Esophagus muscularis mucosa (tissue), 4 donors: ENCODE measurements at regions of chr9 and their contacts with region 1.

Region 1: DNA sequence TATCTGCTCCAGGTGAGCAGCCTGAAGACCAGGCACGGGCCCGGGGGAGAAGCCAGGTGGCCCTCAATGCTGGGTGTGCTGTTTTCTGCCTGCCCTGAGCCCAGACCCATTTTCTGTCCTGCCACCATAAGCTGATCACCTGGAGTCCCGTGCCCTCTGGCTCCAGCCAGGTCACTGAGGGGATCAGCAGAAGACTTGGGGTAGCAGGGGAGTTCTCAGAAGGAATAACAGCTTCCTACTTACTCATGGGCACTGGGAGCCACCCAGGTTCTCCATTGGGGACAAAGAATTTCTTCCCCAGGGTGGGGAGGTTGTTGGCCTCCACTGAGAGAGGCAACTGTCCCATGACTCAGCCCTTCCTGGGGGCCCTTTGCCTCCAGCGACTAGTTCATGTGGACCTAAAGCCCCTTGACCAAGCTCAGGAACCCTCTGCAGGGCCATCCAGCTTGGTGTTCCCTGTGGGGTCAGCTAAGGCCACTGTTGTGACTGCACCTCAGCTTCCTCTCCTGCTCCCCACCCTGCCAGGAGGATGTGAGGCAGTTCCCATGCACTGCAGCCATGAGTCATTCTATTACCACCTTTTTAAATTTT is 175.1 kb downstream of the AUH start:
- DNase-seq: peak; percentile 89
- H3K4me3 ChIP-seq: no peak overlapping the region
- H3K27ac ChIP-seq: no peak overlapping the region
- H3K4me1 ChIP-seq: peaks cover 8 to 20% (median 15%) of the 10 kb centered on the region in 4 donors
- H3K27me3 ChIP-seq: no peaks in the 10 kb centered on the region
- CTCF ChIP-seq: no peak
- EP300 ChIP-seq: no peak
- POLR2A ChIP-seq: no peak

Region 2: DNA sequence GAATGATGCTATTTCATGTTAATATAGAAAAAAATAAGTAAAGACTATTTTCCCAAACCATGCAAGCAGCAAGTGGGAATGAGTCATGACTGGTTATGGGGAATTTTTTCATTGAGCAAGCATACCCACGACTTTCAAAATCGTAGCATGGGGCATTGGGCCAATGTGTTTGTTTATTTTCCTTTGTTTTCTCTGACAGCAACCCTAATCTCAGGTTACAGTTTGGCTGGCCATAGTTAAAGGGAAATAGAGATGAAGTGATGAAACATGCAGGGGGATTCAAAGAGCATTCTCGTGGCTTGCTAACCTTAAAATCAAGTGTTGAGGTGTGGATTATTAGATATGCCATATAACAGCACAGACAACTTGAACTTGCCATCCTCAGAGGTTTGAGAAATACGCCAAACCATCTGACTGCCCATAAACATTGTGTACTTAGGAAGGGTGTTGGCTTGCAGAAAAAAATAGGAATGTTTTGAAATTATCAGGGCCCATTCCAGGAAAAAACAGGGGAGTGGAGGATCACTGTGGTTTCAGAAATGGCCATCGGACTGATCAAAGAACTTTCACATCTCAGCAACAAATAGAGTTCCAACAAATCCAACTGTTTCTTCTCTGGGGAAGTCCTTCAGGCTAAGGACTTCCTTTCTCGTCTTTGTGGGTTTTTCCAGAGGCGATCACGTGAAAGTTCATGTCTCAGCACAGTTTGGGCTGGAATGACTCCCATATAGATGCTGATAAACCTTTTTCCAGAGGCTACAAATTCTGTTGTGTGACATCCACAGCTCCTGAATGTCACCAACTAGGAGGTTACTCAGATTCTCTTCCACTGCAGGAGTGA is 125.9 kb before region 1 on chr9:
- intact Hi-C with region 1: no loop called
- DNase-seq: peak; percentile 92
- H3K4me3 ChIP-seq: no peak overlapping the region
- H3K27ac ChIP-seq: peak overlapping the region; percentile 16 to 66 (median 38)
- H3K4me1 ChIP-seq: peaks cover 0 to 21% (median 10%) of the 10 kb centered on the region in 4 donors
- H3K27me3 ChIP-seq: no peaks in the 10 kb centered on the region
- CTCF ChIP-seq: no peak
- EP300 ChIP-seq: no peak
- POLR2A ChIP-seq: no peak

Region 3: DNA sequence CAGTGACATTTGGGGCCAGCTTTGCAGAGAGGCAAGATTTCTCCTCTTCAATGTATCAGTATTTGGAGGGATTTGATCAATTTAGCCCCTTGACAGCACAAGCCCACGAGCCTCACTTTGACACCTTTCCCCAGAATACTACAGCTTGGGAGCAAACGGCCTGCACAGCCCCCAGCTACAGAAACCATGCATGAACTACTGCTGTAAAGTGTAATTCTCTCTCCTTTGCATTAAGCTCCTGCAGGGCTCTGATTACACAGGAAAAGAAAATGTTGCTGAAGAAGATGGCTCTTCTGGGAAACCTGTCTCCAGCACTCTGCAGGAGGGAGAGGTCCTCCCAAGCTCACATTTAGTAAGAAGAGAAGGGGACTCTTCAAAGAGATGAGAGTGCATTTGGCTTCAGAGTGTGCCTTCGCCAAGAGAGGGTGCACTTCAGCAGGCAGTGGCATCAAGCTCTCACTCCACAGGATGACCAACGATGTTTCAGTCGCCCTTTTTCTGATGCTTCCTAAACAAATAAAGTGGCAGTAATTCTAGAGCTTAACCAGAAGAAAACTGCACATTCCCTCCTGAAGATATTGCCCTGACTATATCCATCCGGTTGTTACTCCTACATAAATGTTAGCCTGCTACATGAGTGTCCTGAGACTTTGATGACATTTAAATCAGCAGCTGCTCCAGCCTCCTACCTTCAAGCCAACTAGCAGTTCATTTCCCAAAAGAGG is 97.0 kb before region 1 on chr9:
- intact Hi-C with region 1: loop called (anchors 5 kb)
- DNase-seq: no peak
- H3K4me3 ChIP-seq: no peak overlapping the region
- H3K27ac ChIP-seq: no peak overlapping the region
- H3K4me1 ChIP-seq: peaks cover 0 to 8% (median 3%) of the 10 kb centered on the region in 4 donors
- H3K27me3 ChIP-seq: no peaks in the 10 kb centered on the region
- CTCF ChIP-seq: peak; percentile 54 to 62 (median 59)
- EP300 ChIP-seq: no peak
- POLR2A ChIP-seq: no peak

Region 4: GRCh38 chr9:91111876-91112275 is 74.7 kb before region 1 on chr9:
- intact Hi-C with region 1: loop called (anchors 5 kb)
- DNase-seq: no peak
- H3K4me3 ChIP-seq: no peak overlapping the region
- H3K27ac ChIP-seq: no peak overlapping the region
- H3K4me1 ChIP-seq: peaks cover 0 to 9% (median 4%) of the 10 kb centered on the region in 4 donors
- H3K27me3 ChIP-seq: no peaks in the 10 kb centered on the region
- CTCF ChIP-seq: no peak
- EP300 ChIP-seq: no peak
- POLR2A ChIP-seq: no peak

Region 5: GRCh38 chr9:91131433-91131839 is 55.2 kb before region 1 on chr9:
- intact Hi-C with region 1: no loop called
- DNase-seq: no peak
- H3K4me3 ChIP-seq: no peak overlapping the region
- H3K27ac ChIP-seq: peak overlapping the region in 3 of 4 donors; percentile 30 to 53 (median 42)
- H3K4me1 ChIP-seq: peaks cover 0 to 16% (median 9%) of the 10 kb centered on the region in 4 donors
- H3K27me3 ChIP-seq: no peaks in the 10 kb centered on the region
- CTCF ChIP-seq: no peak
- EP300 ChIP-seq: peak; percentile 66
- POLR2A ChIP-seq: no peak

Region 6: DNA sequence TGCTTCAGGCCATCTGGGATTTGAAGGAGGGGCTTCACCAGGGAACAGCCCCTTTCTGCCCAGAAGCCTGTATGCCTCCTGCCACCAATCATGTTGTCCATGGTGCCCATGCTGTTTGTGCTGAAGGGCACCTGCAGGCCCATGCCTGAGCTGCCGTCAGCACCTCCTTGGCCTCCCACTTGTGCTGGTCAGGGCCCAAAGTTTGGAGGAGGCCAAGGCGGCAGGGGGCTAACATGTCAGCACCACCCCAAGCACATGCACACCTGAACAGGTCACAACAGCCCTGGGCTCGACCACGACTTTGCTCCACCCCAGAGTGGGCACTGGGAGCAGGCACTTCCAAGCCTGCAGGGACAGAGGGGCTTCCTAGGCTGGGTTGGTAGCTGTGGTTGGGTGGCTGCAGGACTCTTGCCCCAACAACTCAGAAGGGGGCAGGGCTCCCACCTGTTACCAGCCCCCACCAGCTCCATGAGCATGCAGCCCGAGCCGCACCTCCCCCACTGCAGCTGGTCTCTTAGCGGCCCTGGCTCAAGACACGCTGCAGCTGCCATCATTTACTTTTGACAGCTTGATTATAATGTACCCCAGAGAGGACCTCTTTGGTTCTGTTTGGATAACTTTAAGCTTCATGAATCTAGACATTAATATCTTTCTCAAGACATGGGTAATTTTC is 256.8 kb after region 1 on chr9:
- intact Hi-C with region 1: no loop called
- DNase-seq: no peak
- H3K4me3 ChIP-seq: no peak overlapping the region
- H3K27ac ChIP-seq: no peak overlapping the region
- H3K4me1 ChIP-seq: no peaks in the 10 kb centered on the region
- H3K27me3 ChIP-seq: peaks cover 0 to 4% (median 0%) of the 10 kb centered on the region in 4 donors
- CTCF ChIP-seq: no peak
- EP300 ChIP-seq: no peak
- POLR2A ChIP-seq: no peak